ENCODE measurements at regions of chr1 and their contacts with region 1.

Region 1: GRCh38 chr1:7902478-7903085 is 38.1 kb downstream of the TNFRSF9 start:
- DNase-seq: peak; percentile 36 to 71
- ATAC-seq: peak; percentile 50 to 91 (median 76)
- H3K4me3 ChIP-seq: peak overlapping the region in 5 of 10 donors; percentile 9 to 41 (median 36)
- H3K27ac ChIP-seq: no peak overlapping the region
- H3K4me1 ChIP-seq: peaks cover 0 to 4% (median 0%) of the 10 kb centered on the region in 9 donors
- H3K27me3 ChIP-seq: no peaks in the 10 kb centered on the region
- CTCF ChIP-seq: peak; percentile 50 to 76 (median 69)

Region 2: GRCh38 chr1:7606096-7606495 is 296.5 kb before region 1 on chr1:
- intact Hi-C with region 1: no loop called
- DNase-seq: no peak
- ATAC-seq: no peak
- H3K4me3 ChIP-seq: no peak overlapping the region
- H3K27ac ChIP-seq: no peak overlapping the region
- H3K4me1 ChIP-seq: no peaks in the 10 kb centered on the region
- H3K27me3 ChIP-seq: peaks cover 0 to 8% (median 0%) of the 10 kb centered on the region in 7 donors
- CTCF ChIP-seq: no peak

Region 3: DNA sequence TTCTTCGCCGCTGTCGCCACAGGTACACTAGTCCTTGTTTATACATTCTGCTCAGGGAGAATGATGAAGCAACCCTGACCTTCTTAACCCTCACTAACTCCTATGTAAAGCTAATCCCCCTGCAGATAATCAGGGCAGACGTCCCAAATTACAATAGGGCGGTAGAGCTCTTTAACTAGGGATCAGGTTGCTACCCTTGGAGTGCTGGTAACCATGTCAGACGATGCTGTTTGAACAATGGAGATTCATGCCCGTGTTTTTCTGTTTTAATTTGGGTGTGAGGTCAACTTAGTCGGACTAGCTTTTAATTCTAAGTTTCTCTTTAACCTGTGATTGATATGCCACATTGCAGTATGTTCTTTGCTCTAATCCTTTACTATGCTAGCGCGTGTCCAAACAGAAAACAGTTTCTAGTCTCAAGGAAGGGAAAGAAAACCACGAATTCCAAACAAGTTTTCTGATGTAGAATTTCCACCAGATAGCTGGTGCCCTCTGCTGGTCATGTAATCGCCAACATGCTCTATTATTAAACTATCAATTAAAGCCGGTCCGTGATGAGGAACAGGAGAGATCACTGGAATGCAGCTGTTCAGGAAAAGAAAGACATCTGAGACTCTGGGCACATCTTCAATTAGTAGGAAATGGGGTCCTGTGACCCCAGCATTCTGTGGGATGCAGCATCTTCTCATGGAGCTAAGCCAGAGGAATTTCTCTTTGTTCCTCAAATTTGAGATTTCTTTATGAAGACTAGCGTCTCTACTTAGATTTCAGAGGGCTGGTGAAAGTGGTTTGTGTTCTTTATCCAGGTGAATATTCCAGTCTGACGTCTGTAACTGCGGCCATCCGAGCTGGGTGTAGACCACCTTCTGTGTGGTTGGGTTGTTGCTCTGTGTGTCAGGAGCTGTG is 149.8 kb before region 1 on chr1:
- intact Hi-C with region 1: loop called in 3 of 10 experiments (anchors 5 kb)
- DNase-seq: peak in 1 of 2 donors; percentile 71
- ATAC-seq: peak; percentile 33 to 73 (median 56)
- H3K4me3 ChIP-seq: peak overlapping the region in 5 of 10 donors; percentile 3 to 29 (median 16)
- H3K27ac ChIP-seq: no peak overlapping the region
- H3K4me1 ChIP-seq: peaks cover 0 to 16% (median 0%) of the 10 kb centered on the region in 9 donors
- H3K27me3 ChIP-seq: no peaks in the 10 kb centered on the region
- CTCF ChIP-seq: peak; percentile 72 to 91 (median 84)

Region 4: GRCh38 chr1:7810395-7810794 is 92.2 kb before region 1 on chr1:
- intact Hi-C with region 1: loop called in 1 of 10 experiments (anchors 10 kb)
- DNase-seq: no peak
- ATAC-seq: no peak
- H3K4me3 ChIP-seq: no peak overlapping the region
- H3K27ac ChIP-seq: no peak overlapping the region
- H3K4me1 ChIP-seq: no peaks in the 10 kb centered on the region
- H3K27me3 ChIP-seq: no peaks in the 10 kb centered on the region
- CTCF ChIP-seq: no peak

Region 5: DNA sequence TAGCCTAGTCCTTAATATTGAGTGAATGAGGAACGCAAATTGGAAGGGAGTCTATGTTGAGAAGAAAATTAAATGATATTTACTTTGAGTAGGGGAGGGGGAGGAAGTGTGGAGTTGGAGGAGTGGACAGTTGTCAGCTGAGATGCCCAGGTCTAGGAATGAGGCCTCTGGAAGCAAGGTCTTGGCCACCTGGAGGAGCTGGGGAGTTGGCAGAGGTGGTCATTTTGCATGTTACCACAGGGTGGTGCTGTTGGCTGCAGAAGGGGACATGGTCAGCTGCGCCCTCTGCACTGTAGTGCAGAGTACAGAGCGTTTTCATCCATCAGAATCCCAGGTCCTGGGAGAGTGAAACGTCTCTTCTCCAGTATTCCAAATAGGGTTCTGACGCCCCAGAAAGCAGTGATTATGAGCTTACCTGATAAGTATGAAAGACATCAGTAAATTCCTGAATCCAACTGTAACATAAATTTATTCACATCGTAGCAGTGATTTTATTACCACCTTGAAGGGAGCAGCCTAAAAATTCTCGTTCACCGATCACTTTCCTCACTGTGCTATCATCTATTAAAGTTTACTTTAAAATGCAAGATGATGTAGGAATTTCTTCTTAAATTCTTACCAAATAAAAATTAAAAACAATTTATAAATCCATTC is 72.8 kb after region 1 on chr1:
- intact Hi-C with region 1: no loop called
- DNase-seq: peak; percentile 59 to 60
- ATAC-seq: peak; percentile 74 to 98 (median 94)
- H3K4me3 ChIP-seq: no peak overlapping the region
- H3K27ac ChIP-seq: no peak overlapping the region
- H3K4me1 ChIP-seq: peaks cover 0 to 16% (median 7%) of the 10 kb centered on the region in 9 donors
- H3K27me3 ChIP-seq: no peaks in the 10 kb centered on the region
- CTCF ChIP-seq: peak; percentile 69 to 89 (median 81)